Activated CD4-positive, alpha-beta T cell treated with anti-CD3 and anti-CD28 coated beads for 36 hours (primary cell): ENCODE measurements at regions of chr21 and their contacts with region 1.

Region 1: GRCh38 chr21:44911389-44912157 is 9.1 kb downstream of the ITGB2 start:
- DNase-seq: peak; percentile 77
- ATAC-seq: peak; percentile 70
- H3K4me3 Mint-ChIP-seq: peak overlapping the region; percentile 64
- H3K27ac Mint-ChIP-seq: peak overlapping the region; percentile 98
- H3K4me1 Mint-ChIP-seq: peaks cover 79% of the 10 kb centered on the region
- H3K27me3 Mint-ChIP-seq: no peaks in the 10 kb centered on the region

Region 2: GRCh38 chr21:44892536-44893277 is 18.9 kb before region 1 on chr21:
- CTCF ChIA-PET with region 1: interaction called, 9 read pairs
- POLR2A ChIA-PET with region 1: no interaction called
- intact Hi-C with region 1: loop called (anchors 1 to 2 kb)
- DNase-seq: peak; percentile 87
- ATAC-seq: peak; percentile 85
- H3K4me3 Mint-ChIP-seq: no peak overlapping the region
- H3K27ac Mint-ChIP-seq: no peak overlapping the region
- H3K4me1 Mint-ChIP-seq: peaks cover 5% of the 10 kb centered on the region
- H3K27me3 Mint-ChIP-seq: no peaks in the 10 kb centered on the region

Region 3: GRCh38 chr21:44939532-44940115 is 28.1 kb after region 1 on chr21 and contains the start of gene SLX9:
- CTCF ChIA-PET with region 1: interaction called, 5 read pairs
- POLR2A ChIA-PET with region 1: no interaction called
- intact Hi-C with region 1: loop called in 1 of 2 experiments (anchors 1 kb)
- DNase-seq: peak; percentile 91
- ATAC-seq: peak; percentile 96
- H3K4me3 Mint-ChIP-seq: peak within 1 kb of the TSS; percentile 88
- H3K27ac Mint-ChIP-seq: peak within 1 kb of the TSS; percentile 86
- H3K4me1 Mint-ChIP-seq: peaks cover 37% of the 10 kb centered on the region
- H3K27me3 Mint-ChIP-seq: no peaks in the 10 kb centered on the region
- total RNA-seq, gene SLX9: 60.8 to 68.8 TPM

Region 4: GRCh38 chr21:45330075-45330781 is 418.7 kb after region 1 on chr21:
- CTCF ChIA-PET with region 1: no interaction called
- POLR2A ChIA-PET with region 1: no interaction called
- intact Hi-C with region 1: no loop called
- DNase-seq: no peak
- ATAC-seq: no peak
- H3K4me3 Mint-ChIP-seq: no peak overlapping the region
- H3K27ac Mint-ChIP-seq: no peak overlapping the region
- H3K4me1 Mint-ChIP-seq: no peaks in the 10 kb centered on the region
- H3K27me3 Mint-ChIP-seq: no peaks in the 10 kb centered on the region